CD14-positive monocyte (primary cell): ENCODE measurements at regions of chr7 and their contacts with region 1.

Region 1: DNA sequence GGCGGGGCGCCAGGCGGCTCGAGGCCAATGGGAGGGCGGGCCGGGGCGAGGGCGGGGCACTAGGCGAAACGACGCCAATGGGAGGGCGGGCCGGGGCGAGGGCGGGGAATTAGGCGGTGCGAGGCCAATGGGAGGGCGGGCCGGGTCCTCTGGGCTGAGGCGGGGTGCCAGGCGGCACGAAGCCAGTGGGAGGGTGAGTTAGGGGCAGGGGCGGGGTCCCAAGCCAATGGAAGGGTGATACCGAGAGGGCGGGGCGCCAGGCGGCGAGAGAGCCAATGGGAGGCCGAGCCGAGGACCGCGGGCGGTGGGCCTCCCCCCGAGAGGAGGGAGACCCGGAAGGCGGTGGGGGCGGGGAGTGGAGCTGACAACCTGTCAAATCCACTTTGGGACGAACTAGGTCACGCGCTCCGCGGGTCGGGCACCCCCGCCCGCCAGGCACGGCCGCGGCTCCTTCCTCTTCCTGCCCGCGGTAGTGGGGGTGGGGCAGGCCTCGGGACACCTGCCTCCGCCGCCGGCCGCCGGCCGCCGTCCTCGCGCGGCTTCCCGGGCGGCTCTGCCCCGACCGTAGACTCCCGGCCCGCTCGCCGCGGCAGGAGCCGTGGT is 28.0 kb upstream of the KMT2C start:
- DNase-seq: peak; percentile 100
- H3K4me3 ChIP-seq: peak overlapping the region; percentile 89 to 97 (median 93)
- H3K4me3 Mint-ChIP-seq: peak overlapping the region; percentile 93 to 98
- H3K27ac ChIP-seq: peak overlapping the region; percentile 93 to 97
- H3K27ac Mint-ChIP-seq: peak overlapping the region in 5 of 7 donors; percentile 59 to 96 (median 91)
- H3K4me1 ChIP-seq: peaks cover 35 to 39% of the 10 kb centered on the region in 2 donors
- H3K4me1 Mint-ChIP-seq: peaks cover 36% of the 10 kb centered on the region
- H3K27me3 ChIP-seq: no peaks in the 10 kb centered on the region
- H3K27me3 Mint-ChIP-seq: peaks cover 0 to 2% (median 0%) of the 10 kb centered on the region in 3 donors
- CTCF ChIP-seq: no peak

Region 2: GRCh38 chr7:152336754-152337368 is 126.9 kb before region 1 on chr7:
- intact Hi-C with region 1: loop called in 1 of 2 experiments (anchors 10 kb)
- DNase-seq: peak in 2 of 3 donors; percentile 39 to 47
- H3K4me3 ChIP-seq: no peak overlapping the region
- H3K4me3 Mint-ChIP-seq: no peak overlapping the region
- H3K27ac ChIP-seq: peak overlapping the region in 1 of 2 donors; percentile 66
- H3K27ac Mint-ChIP-seq: peak overlapping the region; percentile 38 to 85 (median 48)
- H3K4me1 ChIP-seq: peaks cover 28 to 40% of the 10 kb centered on the region in 2 donors
- H3K4me1 Mint-ChIP-seq: peaks cover 54% of the 10 kb centered on the region
- H3K27me3 ChIP-seq: no peaks in the 10 kb centered on the region
- H3K27me3 Mint-ChIP-seq: no peaks in the 10 kb centered on the region
- CTCF ChIP-seq: peak; percentile 73

Region 3: DNA sequence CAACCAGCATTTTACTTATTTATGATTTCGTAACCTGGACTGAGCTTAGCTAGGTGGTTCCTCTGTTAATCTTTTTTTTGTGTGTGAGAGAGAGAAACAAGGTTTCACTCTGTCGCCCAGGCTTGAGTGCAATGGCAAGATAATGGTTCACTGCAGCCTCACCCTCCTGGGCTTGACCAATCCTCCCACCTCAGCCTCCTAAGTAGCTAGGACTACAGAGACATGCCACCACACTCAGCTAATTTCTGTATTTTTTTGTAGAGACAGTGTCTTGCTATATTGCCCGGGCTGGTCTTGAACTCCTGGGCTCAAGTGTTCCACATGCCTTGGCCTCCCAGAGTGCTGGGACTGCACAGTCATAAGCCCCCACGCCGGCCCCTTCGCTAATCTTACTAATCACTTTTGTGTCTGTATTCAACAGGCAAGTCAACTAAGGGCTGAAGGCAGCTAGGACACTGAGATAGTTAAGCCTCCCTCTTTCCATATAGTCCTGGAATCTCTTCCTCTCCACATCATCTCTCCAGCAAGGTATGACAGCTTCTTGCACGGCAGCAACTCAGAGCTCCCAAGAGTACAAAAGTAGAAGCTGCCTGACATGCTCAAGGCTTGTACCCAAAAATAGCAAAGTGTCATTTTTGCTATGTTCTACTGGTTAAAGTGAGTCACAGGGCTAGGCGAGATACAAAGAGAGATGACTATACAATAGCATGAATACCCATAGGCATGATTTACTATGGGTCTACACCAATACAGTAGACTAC is 39.3 kb before region 1 on chr7:
- intact Hi-C with region 1: loop called in 1 of 2 experiments (anchors 5 kb)
- DNase-seq: no peak
- H3K4me3 ChIP-seq: no peak overlapping the region
- H3K4me3 Mint-ChIP-seq: no peak overlapping the region
- H3K27ac ChIP-seq: peak overlapping the region in 1 of 2 donors; percentile 49
- H3K27ac Mint-ChIP-seq: peak overlapping the region in 6 of 7 donors; percentile 23 to 74 (median 67)
- H3K4me1 ChIP-seq: peaks cover 19 to 50% of the 10 kb centered on the region in 2 donors
- H3K4me1 Mint-ChIP-seq: peaks cover 59% of the 10 kb centered on the region
- H3K27me3 ChIP-seq: no peaks in the 10 kb centered on the region
- H3K27me3 Mint-ChIP-seq: peaks cover 0 to under 1% (median 0%) of the 10 kb centered on the region in 3 donors
- CTCF ChIP-seq: no peak

Region 4: DNA sequence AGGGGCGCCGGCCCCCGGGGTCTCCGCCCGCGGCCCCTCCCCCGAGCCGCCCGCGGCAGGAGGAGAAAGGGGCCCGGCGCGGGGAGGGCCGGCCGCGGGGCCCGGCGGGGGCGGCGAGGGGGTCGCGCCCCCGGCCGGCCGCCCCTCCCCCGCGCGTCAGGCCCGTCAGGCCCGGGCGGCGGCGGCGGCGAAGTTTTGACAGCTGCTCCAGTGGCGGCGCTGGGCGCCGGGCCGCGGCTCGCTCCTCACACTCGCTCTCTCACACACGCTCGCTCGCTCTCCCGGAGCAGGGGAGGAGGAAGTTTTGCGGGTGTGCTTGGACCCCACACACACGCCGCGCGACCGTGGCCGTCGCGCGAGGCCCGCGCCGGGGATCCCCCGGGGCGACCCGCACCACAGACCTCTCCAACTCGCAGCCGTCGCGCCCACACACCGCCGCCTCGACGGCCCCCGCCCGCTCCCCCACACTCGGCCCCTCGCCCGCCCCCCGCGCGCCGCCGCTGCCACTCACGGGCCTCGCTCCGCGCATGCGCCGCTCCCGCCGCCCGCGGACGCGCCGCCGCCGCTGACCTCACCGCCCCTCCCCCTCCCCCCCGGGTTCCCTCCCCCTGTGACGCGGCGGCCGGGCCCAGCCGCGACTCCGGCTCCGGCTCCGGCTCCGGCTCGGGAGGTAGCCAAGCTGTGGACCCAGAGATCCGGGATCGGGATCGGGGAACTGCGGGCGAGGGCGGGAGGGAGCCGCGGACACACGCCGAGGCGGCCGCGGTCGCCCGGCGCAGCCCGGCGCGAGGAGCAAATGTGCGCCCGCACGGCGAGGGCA is 27.5 kb before region 1 on chr7:
- intact Hi-C with region 1: loop called in 1 of 2 experiments (anchors 1 kb)
- DNase-seq: peak; percentile 85 to 92 (median 91)
- H3K4me3 ChIP-seq: peak overlapping the region; percentile 57 to 94 (median 82)
- H3K4me3 Mint-ChIP-seq: peak overlapping the region; percentile 84 to 89
- H3K27ac ChIP-seq: peak overlapping the region; percentile 74 to 86
- H3K27ac Mint-ChIP-seq: peak overlapping the region; percentile 82 to 93 (median 89)
- H3K4me1 ChIP-seq: peaks cover 15 to 37% of the 10 kb centered on the region in 2 donors
- H3K4me1 Mint-ChIP-seq: peaks cover 33% of the 10 kb centered on the region
- H3K27me3 ChIP-seq: no peaks in the 10 kb centered on the region
- H3K27me3 Mint-ChIP-seq: peaks cover 1 to 6% (median 4%) of the 10 kb centered on the region in 3 donors
- CTCF ChIP-seq: no peak

Region 5: DNA sequence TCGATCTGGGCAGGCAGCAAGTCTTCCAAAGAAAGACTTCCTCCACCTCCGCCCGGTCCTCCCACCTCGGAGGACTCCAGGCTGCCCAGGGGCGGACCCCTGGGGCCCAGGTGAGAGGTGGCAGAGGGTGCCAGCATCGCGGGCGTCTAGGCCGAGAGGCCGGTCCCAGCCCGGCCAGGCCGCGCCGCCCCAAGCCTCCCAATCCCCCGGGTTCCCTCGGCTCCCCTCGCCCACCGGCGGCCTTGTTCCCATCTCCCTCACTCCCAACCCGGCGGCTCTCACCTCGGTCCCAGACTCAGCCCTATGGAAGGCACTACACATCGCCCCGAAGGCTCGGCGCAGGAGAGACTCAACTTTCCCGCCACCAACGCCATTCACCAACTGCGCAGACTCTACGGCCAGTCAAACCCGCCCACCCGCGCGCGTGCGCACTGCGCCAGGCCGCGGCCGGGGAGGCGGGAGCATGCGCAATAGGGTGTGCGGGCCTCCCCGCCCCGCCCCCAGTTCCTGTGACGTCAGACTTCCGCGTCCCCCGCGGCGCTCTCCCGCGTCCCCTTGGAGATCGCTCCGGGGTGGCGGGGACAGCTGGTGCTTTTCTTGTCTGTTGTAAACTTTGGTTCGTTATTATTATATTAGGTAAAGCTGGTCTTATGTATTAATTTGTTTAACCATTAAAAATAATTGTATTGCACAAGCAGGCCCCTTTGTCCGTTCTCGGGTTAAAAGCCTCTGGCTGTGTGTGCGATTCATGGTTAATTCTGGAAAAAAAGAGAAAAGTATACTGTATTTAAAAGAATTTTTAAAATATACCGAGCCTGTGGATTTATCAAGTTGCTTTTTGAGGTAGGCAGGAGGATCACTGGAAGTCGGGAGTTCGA is 212.2 kb after region 1 on chr7 and contains the start of gene XRCC2:
- intact Hi-C with region 1: loop called (anchors 5 kb)
- DNase-seq: peak; percentile 85 to 87 (median 86)
- H3K4me3 ChIP-seq: peak within 1 kb of the TSS; percentile 73 to 88 (median 82)
- H3K4me3 Mint-ChIP-seq: peak within 1 kb of the TSS; percentile 91 to 97
- H3K27ac ChIP-seq: peak within 1 kb of the TSS; percentile 60 to 83
- H3K27ac Mint-ChIP-seq: peak within 1 kb of the TSS; percentile 91 to 98 (median 97)
- H3K4me1 ChIP-seq: peaks cover 12 to 22% of the 10 kb centered on the region in 2 donors
- H3K4me1 Mint-ChIP-seq: peaks cover 21% of the 10 kb centered on the region
- H3K27me3 ChIP-seq: no peaks in the 10 kb centered on the region
- H3K27me3 Mint-ChIP-seq: peaks cover 0 to 2% (median 1%) of the 10 kb centered on the region in 3 donors
- CTCF ChIP-seq: no peak
- polyA plus RNA-seq, gene XRCC2: 0.03 to 0.05 TPM in 2 of 3 donors, not detected in the other